Right ventricle myocardium inferior (tissue), 1 donor: ENCODE measurements at regions of chr12 and their contacts with region 1.

Region 1: GRCh38 chr12:6383572-6384498 is at the start of gene LTBR:
- DNase-seq: peak; percentile 99
- ATAC-seq: peak; percentile 98
- total RNA-seq, gene LTBR: 34.3 TPM

Region 2: GRCh38 chr12:6341417-6342139 is 42.3 kb before region 1 on chr12 and contains the start of gene TNFRSF1A:
- intact Hi-C with region 1: loop called (anchors 2 kb)
- DNase-seq: peak; percentile 81
- ATAC-seq: peak; percentile 88
- total RNA-seq, gene TNFRSF1A: 59.8 TPM